Posterior cingulate gyrus (tissue), 11 donors: ENCODE measurements at regions of chr11 and their contacts with region 1.

Region 1: DNA sequence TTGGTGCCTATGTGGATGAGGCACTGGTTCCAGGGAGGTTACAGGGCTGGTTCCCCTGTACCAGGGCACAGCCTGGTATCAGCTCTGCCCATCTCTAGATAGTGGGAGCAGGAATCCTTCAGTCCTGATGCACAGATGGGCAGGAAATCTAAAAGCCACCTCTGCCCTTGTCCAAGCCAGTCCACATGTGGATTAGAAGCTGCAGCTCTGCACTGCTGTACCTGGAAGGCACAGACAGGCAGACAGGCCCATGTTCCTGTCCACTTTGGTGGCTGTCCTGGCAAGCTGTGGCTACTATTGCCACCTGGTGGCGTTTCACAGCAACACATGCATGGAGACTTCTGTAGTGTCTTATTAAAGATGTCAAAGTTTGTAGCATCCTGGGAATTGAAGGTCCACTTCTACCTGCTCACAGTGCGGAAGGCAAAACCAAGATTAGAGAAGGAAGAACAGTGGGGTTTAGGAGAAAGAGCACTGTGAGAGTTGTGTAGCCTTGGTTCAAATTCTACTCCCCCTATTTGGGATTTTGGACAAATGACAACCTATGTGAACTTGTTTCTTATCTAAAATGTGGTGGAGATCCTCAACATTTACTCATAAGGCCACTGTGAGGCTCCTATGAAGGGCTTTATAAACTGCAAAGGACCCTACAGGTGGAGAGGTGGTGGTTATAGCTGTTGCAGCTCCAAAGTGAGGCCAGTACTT is 30.1 kb downstream of the NAV2 start:
- DNase-seq: peak; percentile 75 to 98 (median 88)

Region 2: DNA sequence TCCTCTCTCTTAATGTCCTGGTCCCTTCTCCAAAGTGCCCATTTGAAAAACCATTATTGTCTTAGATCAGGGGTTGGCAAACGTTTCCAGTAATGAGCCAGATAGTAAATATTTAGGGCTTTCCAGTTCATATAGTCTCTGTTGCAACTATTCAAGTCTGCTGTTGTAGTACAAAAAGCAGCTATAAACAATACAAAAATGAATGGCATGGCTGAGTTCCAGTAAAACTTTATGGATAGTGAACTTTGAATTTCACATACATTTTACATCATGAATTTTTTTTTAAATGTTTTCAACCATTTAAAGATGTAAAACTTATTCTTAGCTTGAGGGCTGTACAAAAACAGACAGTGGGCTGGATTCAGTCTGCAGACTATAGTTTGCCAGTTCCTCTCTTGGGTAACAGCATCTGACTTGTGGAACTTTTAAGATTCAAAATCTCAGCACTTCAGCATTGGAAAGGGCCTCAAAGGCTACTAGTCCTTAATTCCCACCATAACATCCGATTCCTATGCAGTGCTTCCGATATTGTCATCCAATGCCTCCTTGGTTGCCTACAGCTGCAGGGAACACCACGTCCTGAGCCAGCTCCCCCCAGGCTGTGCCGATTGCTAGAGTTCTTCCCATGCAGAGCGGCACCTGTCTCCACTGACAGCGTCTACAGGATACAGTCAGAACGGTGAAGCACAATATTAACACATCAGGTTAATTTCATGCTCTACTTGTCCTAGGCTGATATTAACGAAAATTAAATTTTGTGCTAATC is 436.4 kb before region 1 on chr11:
- intact Hi-C with region 1: loop called (anchors 10 kb)
- DNase-seq: no peak

Region 3: GRCh38 chr11:19561011-19561410 is 181.7 kb before region 1 on chr11:
- intact Hi-C with region 1: loop called (anchors 1 kb)
- DNase-seq: peak in 1 of 10 donors; percentile 77